A549 (cell line): ENCODE measurements at regions of chr19 and their contacts with region 1.

Region 1: GRCh38 chr19:3607303-3608078 is 816 bp upstream of the TBXA2R start:
- DNase-seq: no peak
- ATAC-seq: peak; percentile 5 to 8; a peak in 4 of 6 replicates
- H3K4me3 ChIP-seq: peak overlapping the region; percentile 40; the same call in 2 of the 3 replicates
- H3K27ac ChIP-seq: peak overlapping the region; percentile 72 to 91
- H3K4me1 ChIP-seq: peaks cover 19% of the 10 kb centered on the region
- CTCF ChIP-seq: no peak
- EP300 ChIP-seq: no peak
- POLR2A ChIP-seq: no peak
- RAD21 ChIP-seq: no peak

Region 2: DNA sequence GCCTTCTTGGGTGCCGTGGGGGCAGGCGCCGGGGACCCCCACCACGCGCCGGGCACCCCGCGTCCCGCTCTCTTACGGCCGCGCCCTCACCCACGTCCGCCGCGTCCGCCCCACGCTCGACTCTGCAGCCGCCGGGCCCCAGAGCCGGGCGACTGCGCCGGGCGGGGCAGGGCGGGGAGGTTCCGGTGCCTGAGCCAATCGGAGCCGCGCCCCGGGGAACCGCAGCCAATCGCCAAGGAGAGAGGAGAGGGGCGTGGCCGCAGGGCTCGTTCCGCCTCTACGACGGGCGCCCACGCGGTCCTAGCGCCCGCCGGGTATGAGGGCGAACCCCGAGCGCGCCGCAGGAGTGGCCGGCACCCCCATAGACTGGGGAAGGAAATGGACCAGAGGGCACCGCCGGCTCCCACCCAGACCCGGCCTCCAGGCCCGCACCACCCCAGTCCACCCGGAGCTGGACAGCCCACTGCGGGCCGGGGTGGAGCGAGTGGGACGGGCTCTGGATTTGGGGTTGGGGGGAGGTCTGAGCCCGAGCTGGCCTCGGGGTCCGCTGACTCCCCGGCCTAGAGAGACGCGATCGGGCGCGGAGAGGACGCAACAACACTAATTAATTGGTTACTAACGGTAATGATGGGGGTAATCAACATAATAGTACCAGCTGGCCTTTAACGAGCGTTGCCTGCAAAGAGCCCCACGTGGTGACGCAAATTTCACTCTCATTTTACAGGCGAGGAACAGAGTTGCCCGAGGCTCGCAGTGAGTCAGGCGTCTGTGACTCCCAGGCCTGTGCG is 49.8 kb before region 1 on chr19 and contains the start of gene MFSD12:
- CTCF ChIA-PET with region 1: no interaction called
- POLR2A ChIA-PET with region 1: no interaction called
- DNase-seq: peak; percentile 92 to 93
- ATAC-seq: peak; percentile 92 to 94
- H3K4me3 ChIP-seq: peak within 1 kb of the TSS; percentile 87
- H3K27ac ChIP-seq: peak within 1 kb of the TSS; percentile 89 to 100
- H3K4me1 ChIP-seq: peaks cover 32% of the 10 kb centered on the region
- CTCF ChIP-seq: no peak
- EP300 ChIP-seq: 0 out of 5 replicates have a peak, but pooled peaks of 1 of the 2 experiments have one; percentile 21
- POLR2A ChIP-seq: peak; percentile 56
- RAD21 ChIP-seq: no peak; a peak in 1 of 5 replicates
- polyA plus RNA-seq, gene MFSD12: 52.5 and 54.9 TPM in 2 replicates

Region 3: DNA sequence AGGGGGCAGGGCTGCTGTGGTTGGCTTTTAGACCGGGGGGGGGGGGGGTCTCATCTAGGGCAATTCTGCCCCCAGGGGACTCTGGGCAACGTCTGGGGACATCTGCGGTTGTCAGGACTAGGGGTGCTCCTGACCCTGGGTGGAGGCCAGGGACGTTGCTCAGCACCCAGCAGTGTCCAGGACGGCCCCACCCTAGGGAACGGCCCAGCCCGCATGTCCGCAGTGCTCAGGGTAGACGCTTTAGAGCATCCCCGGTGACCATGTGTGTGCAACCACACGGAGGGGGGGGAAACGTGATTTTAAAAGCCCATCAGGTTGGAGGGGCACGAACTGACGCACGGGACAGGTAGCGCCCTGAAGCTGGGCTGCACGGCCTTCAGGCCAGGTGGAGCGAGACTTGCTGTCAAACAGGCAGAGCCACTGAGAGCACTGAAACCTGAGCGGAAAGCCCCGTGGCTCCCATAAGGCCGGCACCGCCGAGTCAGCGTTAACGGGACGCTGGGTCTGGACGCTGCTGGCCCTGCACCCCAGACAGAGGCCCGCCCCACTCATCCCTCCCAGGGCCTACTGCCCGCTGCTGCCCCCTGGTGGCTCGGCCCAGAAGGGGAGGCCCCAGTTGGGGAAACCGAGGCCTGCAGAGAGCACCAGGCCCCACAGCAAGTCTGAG is 10.8 kb after region 1 on chr19:
- CTCF ChIA-PET with region 1: interaction called, 12 read pairs
- POLR2A ChIA-PET with region 1: no interaction called
- DNase-seq: peak in 1 of 2 experiments; percentile 44
- ATAC-seq: peak; percentile 50 to 83; a peak in 4 of 6 replicates
- H3K4me3 ChIP-seq: no peak overlapping the region
- H3K27ac ChIP-seq: no peak overlapping the region
- H3K4me1 ChIP-seq: no peaks in the 10 kb centered on the region
- CTCF ChIP-seq: peak; percentile 67
- EP300 ChIP-seq: no peak
- POLR2A ChIP-seq: no peak
- RAD21 ChIP-seq: peak; percentile 54 to 65